Uterus (tissue), 4 donors: ENCODE measurements at regions of chr5 and their contacts with region 1.

Region 1: GRCh38 chr5:146533260-146533857 is 17.4 kb upstream of the GPR151 start:
- DNase-seq: peak; percentile 32 to 35
- H3K4me3 ChIP-seq: no peak overlapping the region
- H3K27ac ChIP-seq: no peak overlapping the region
- H3K4me1 ChIP-seq: no peaks in the 10 kb centered on the region
- H3K27me3 ChIP-seq: no peaks in the 10 kb centered on the region
- CTCF ChIP-seq: peak; percentile 53 to 60 (median 58)
- POLR2A ChIP-seq: no peak

Region 2: DNA sequence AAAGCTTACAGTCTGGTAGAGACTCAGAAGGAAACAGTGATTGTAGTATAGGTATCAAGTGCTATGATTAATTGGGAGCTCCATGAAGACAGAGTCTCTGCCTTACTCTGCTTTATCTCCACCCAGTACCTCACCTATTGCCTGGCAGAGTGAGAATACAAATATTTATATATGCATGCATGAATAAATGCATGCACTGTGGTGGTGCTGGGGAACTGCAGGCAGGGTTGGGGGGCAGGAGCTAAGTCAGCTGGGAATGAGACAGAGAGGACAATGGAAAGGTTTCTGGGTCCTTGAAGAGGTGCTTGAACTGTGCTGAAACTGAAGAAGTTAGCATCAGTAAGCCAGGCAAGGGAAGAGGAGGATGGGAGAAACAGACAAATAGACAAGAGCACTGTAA is 426.0 kb after region 1 on chr5:
- intact Hi-C with region 1: loop called (anchors 10 kb)
- DNase-seq: no peak
- H3K4me3 ChIP-seq: no peak overlapping the region
- H3K27ac ChIP-seq: no peak overlapping the region
- H3K4me1 ChIP-seq: no peaks in the 10 kb centered on the region
- H3K27me3 ChIP-seq: no peaks in the 10 kb centered on the region
- CTCF ChIP-seq: no peak
- POLR2A ChIP-seq: no peak